ENCODE measurements at regions of chr7 and their contacts with region 1.

Region 1: DNA sequence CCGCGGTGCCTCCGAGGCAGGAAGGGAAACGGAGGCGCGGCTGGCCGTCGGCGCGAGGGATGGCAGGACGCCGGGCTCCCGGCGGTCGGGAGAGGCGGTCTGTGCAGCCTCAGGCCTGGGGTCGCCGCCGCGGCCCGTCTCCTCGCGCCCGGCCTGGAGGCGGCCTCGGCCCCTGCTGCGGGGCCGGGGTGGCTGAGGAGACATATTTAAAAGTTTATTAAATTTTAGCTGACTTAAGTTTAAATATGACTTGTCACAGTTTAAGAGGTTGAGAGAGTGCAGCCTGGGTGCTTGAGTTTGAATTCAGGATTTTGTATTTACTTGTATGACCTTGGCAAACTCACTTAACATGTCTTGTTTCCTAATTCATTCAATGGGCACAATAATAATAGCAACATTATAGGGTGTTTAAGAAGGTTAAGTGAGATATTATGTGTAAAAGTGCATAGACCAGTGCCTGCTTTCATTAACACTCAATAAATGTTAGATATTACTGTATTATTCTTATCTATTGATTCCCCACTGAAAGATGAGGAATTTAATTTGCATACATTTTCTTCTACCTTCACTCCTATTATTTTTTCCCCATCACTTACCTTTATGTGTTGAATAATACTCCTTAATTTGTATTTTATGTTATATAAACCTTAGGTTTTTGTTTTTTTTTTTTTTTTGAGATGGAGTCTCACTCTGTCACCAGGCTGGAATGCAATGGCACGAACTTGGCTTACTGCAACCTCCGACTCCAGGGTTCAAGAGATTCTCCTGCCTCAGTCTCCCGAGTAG is 718 bp downstream of the DYNC2I1 start:
- DNase-seq: no peak
- ATAC-seq: no peak
- H3K4me3 ChIP-seq: peak overlapping the region in 4 of 5 experiments; percentile 56 to 72 (median 68)
- H3K4me3 Mint-ChIP-seq: peak overlapping the region; percentile 97
- H3K27ac ChIP-seq: peak overlapping the region; percentile 34 to 85
- H3K27ac Mint-ChIP-seq: peak overlapping the region; percentile 59
- H3K4me1 ChIP-seq: peaks cover 4 to 5% of the 10 kb centered on the region in 2 donors
- H3K4me1 Mint-ChIP-seq: peaks cover 13% of the 10 kb centered on the region
- H3K27me3 ChIP-seq: peaks cover 0 to 3% (median 0%) of the 10 kb centered on the region in 4 experiments
- H3K27me3 Mint-ChIP-seq: no peaks in the 10 kb centered on the region
- CTCF ChIP-seq: no peak

Region 2: DNA sequence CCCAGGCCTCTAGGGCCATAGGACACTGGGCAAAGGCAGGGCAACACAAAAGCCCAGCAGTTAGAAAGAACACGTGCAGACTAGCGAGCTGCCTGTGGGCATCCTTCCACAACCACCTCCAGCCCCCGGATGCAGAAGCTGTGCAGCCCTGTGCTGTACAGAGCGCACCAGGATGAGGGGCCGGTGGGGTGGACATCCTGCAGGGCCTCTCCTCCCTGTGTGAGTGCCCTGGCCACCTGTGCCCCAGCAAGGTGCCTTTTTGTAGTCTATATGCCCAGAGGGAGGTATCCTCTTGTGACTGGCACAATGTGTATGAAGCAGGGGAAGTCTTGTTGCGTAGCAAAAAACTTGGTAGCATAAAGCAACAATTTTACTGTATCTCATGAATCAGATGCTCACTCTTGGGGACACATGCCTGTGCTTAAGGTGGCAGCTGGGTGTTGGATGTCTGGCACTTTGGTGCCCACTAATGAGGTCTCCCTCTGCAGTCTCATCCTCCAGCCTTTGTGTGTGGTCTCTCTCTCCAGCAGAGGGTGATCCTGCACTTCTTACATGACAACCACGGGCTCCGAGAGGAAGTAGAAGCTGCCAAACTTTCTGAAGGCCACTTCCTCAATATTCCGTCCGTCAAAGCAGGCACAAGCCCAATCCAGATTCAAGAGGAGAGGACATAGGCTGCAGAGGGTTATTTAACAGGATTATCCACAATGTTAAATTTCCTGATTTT is 161.2 kb before region 1 on chr7:
- CTCF ChIA-PET with region 1: interaction called, 7 read pairs
- POLR2A ChIA-PET with region 1: no interaction called
- intact Hi-C with region 1: loop called (anchors 2 kb)
- DNase-seq: peak; percentile 83
- ATAC-seq: peak; percentile 97
- H3K4me3 ChIP-seq: peak overlapping the region in 1 of 5 experiments; percentile 31
- H3K4me3 Mint-ChIP-seq: peak overlapping the region; percentile 26
- H3K27ac ChIP-seq: no peak overlapping the region
- H3K27ac Mint-ChIP-seq: peak overlapping the region; percentile 15
- H3K4me1 ChIP-seq: peaks cover 0 to 7% of the 10 kb centered on the region in 2 donors
- H3K4me1 Mint-ChIP-seq: peaks cover 8% of the 10 kb centered on the region
- H3K27me3 ChIP-seq: no peaks in the 10 kb centered on the region
- H3K27me3 Mint-ChIP-seq: no peaks in the 10 kb centered on the region
- CTCF ChIP-seq: peak; percentile 66

Region 3: GRCh38 chr7:158704704-158705468 is 152.2 kb before region 1 on chr7 and contains the start of gene NCAPG2:
- CTCF ChIA-PET with region 1: interaction called, 6 read pairs
- POLR2A ChIA-PET with region 1: interaction called, 4 read pairs
- intact Hi-C with region 1: loop called (anchors 1 kb)
- DNase-seq: peak; percentile 98
- ATAC-seq: peak; percentile 97
- H3K4me3 ChIP-seq: peak within 1 kb of the TSS; percentile 24 to 88 (median 81)
- H3K4me3 Mint-ChIP-seq: peak within 1 kb of the TSS; percentile 92
- H3K27ac ChIP-seq: peak within 1 kb of the TSS; percentile 36 to 85
- H3K27ac Mint-ChIP-seq: peak within 1 kb of the TSS; percentile 94
- H3K4me1 ChIP-seq: peaks cover 6 to 12% of the 10 kb centered on the region in 2 donors
- H3K4me1 Mint-ChIP-seq: peaks cover 16% of the 10 kb centered on the region
- H3K27me3 ChIP-seq: no peaks in the 10 kb centered on the region
- H3K27me3 Mint-ChIP-seq: no peaks in the 10 kb centered on the region
- CTCF ChIP-seq: peak; percentile 28
- total RNA-seq, gene NCAPG2: 9.8 and 11.4 TPM in 2 replicates

Region 4: GRCh38 chr7:159075563-159076238 is 218.6 kb after region 1 on chr7:
- CTCF ChIA-PET with region 1: no interaction called
- POLR2A ChIA-PET with region 1: no interaction called
- intact Hi-C with region 1: no loop called
- DNase-seq: no peak
- ATAC-seq: no peak
- H3K4me3 ChIP-seq: no peak overlapping the region
- H3K4me3 Mint-ChIP-seq: no peak overlapping the region
- H3K27ac ChIP-seq: no peak overlapping the region
- H3K27ac Mint-ChIP-seq: no peak overlapping the region
- H3K4me1 ChIP-seq: no peaks in the 10 kb centered on the region
- H3K4me1 Mint-ChIP-seq: no peaks in the 10 kb centered on the region
- H3K27me3 ChIP-seq: no peaks in the 10 kb centered on the region
- H3K27me3 Mint-ChIP-seq: peaks cover 10% of the 10 kb centered on the region
- CTCF ChIP-seq: no peak

Measured in B cell (primary cell).